ENCODE measurements at regions of chr5 and their contacts with region 1.

Region 1: DNA sequence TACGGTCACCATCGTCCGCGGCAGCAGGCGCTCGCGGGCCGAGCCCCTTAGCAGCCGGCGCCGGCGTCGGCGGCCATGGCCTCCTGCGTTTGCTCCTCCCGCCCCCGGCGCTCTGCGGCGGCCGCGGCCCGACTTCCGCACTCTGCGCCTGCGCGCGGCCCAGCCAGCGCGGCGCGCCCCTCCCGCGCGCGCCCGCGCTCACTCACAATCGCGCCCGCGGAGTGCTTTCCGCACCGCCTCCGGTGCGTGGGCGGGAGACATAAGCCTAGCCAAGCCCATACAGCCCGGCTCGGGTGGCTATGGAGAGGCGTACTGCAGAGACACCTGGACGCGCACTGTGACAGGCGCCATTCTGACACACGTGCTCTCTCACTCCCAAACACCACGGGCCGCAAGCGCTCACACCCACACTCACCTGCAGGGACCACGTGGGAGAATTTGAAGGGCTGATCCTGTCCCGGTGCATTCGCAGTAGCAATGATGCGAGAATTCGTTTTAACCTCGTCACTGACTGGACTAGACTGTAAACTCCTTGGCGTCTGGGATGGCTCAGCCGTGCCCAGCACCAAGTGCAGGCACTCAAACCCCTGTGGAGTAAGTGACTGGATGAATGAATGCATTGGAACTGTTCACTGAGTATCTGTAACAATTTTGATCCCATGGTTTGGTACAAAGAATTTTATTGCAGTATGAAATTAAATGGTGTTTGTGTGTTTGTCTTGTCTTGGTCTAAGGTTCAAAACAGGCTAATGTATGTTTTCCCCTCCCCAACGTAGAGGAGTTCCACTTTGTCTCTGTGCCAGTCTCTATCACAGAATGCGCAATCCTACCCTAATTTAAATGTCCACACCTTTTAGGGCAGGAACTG is at the start of gene RNF145:
- DNase-seq: peak; percentile 87 to 93 (median 92)
- ATAC-seq: peak; percentile 59 to 86 (median 82)
- H3K4me3 ChIP-seq: peak within 1 kb of the TSS; percentile 62 to 99 (median 90)
- H3K27ac ChIP-seq: peak within 1 kb of the TSS; percentile 82 to 99 (median 94)
- H3K4me1 ChIP-seq: peaks cover 3 to 50% (median 24%) of the 10 kb centered on the region in 12 donors
- H3K27me3 ChIP-seq: no peaks in the 10 kb centered on the region
- CTCF ChIP-seq: no peak
- POLR2A ChIP-seq: no peak
- total RNA-seq, gene RNF145: 15.5 to 47.0 (median 25.2) TPM

Region 2: DNA sequence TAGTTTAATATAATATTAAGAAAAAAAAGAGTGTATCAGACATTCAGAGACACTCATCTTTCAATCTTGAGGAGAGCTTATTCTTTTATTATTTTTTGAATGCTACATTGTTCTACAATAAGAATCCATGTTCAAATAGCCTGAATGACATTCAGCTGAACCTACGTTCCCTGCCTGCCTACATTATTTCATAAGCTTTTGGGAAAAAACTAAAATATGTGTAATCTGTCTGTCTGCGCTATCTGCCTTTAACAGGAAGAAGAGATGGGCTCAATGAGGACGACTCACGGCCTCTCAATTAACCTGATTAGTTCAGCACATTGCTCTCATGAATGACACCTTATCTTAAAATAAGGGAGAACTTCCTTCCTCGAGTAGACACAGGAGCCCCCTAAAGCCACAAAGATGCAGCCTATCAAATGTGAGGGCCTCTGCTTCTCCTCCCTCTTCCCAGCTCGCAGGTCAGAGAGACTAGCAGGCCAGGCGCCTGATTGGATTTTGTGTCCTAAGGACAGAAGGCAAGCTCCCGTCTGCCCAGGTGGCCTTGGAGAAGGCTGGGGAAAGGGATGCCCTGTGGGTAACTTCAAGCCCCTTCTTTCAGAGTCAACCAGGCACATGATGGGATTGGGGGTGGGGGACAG is 147.7 kb before region 1 on chr5:
- intact Hi-C with region 1: no loop called
- DNase-seq: no peak
- ATAC-seq: peak in 2 of 4 donors; percentile 28 to 43
- H3K4me3 ChIP-seq: peak overlapping the region in 10 of 12 donors; percentile 6 to 54 (median 29)
- H3K27ac ChIP-seq: peak overlapping the region; percentile 44 to 83 (median 65)
- H3K4me1 ChIP-seq: peaks cover 0 to 57% (median 24%) of the 10 kb centered on the region in 12 donors
- H3K27me3 ChIP-seq: no peaks in the 10 kb centered on the region
- CTCF ChIP-seq: no peak
- POLR2A ChIP-seq: no peak

Region 3: DNA sequence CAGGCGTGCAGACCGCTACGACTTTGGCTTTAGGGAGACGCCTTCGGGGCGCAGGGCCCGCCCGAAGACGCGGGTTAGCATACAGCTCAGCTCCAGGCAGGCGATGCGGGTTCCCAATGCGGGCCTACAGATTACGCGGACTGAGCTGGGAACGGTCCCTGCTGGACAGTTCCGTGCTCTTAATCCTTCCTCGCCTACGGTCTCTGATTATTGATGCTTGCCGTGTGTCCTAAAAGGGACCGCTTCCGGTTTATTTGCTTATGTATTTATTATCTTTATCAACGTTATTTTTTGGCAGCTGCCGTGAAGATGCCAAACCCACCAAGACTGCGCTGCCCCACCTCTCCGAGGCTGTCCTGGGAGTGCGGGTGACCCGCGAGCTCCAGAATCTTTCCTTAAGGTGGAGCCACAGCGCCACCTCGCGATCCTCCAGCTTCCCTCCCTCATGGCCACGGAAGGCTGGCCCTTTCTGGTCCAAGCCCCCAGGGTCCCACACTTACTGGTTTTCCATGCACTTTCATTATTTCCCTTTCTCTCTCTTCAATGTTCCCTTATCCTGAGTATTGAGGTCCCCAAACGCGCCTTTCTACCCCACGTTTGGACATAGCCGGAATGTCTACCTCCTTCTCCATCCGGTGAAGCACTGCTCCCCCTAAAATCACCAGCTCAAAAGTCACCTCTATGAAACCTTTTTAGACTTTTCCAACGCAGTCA is 102.9 kb before region 1 on chr5:
- intact Hi-C with region 1: no loop called
- DNase-seq: peak; percentile 73 to 85 (median 81)
- ATAC-seq: peak; percentile 79 to 92 (median 92)
- H3K4me3 ChIP-seq: peak overlapping the region; percentile 11 to 56 (median 44)
- H3K27ac ChIP-seq: peak overlapping the region in 3 of 12 donors; percentile 8 to 51 (median 36)
- H3K4me1 ChIP-seq: peaks cover 0 to 42% (median 13%) of the 10 kb centered on the region in 12 donors
- H3K27me3 ChIP-seq: peaks cover 0 to 65% (median 19%) of the 10 kb centered on the region in 9 donors
- CTCF ChIP-seq: peak; percentile 83 to 98 (median 95)
- POLR2A ChIP-seq: no peak

Region 4: DNA sequence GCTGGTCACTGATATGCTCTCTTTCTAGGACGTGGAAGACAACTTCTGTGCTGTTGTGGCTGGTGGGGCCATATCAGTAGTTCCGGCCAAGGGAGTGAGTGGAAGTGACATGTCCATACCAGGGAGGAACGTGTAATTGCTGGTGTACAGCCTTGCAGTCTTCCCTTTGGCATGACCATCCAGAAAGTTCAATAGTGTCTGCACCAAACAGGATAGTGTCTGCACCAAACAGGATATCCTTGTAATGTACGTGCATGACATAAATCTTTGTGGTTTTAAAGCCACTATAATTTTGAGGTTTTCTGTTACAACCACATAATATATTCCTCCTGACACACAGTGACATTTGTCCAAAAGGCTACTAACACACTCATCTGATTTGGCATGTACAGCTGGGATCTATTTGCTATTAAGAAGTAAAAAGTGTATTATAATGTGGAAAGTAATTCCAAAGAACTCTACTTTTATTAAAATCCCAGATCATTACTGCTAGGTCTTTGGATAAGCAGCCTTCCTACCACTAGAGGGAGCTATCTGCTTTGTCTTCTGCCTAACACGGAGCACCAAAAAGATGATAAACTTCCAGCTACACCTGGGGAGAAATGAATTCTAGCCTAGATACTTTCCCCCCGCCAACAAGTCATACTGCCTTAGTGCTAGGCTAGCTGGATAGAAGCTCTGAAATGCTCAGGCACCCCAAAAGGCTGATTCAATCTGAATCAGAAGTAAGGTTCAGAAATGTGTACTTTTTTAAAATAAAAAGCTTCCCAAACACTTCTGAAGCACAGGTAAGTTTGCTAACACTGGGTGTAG is 53.0 kb before region 1 on chr5:
- intact Hi-C with region 1: loop called in 5 of 10 experiments (anchors 5 to 10 kb)
- DNase-seq: peak in 1 of 5 donors; percentile 40
- ATAC-seq: peak; percentile 59 to 84 (median 78)
- H3K4me3 ChIP-seq: no peak overlapping the region
- H3K27ac ChIP-seq: peak overlapping the region in 1 of 12 donors; percentile 23
- H3K4me1 ChIP-seq: peaks cover 0 to 7% (median 0%) of the 10 kb centered on the region in 12 donors
- H3K27me3 ChIP-seq: no peaks in the 10 kb centered on the region
- CTCF ChIP-seq: peak; percentile 77 to 95 (median 89)
- POLR2A ChIP-seq: no peak

Region 5: DNA sequence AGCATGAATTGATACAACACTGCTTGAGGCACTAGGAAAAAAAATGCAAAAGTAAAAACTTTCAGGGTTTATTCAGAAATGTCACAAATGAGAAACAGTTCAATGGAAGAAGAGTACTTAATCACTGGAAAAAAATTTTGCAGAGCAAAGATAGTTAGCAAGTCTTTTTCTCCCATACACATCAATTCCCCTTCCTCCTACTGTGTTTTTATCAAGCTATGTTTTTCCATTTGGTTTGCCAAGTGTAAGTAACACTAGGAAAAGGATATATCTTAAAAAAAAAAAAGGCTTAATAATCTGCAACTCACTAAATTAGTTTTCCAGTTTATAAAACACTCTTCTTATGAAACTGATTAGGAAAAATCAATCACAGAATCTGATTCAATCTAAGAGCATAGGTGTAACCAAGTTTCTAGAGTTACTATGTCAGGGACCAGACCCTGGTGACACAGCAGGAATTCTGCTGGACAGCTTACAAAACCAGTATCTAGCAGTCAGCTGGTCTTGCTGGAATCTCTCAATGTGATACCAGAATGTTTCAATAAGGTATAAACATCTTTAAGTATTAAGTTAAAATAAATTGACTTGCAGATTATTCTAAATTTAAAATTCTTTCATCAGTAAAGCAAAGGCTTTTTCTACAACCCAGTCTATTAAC is 35.0 kb before region 1 on chr5:
- intact Hi-C with region 1: loop called in 7 of 10 experiments (anchors 5 kb)
- DNase-seq: no peak
- ATAC-seq: peak in 3 of 4 donors; percentile 62 to 71 (median 64)
- H3K4me3 ChIP-seq: no peak overlapping the region
- H3K27ac ChIP-seq: peak overlapping the region; percentile 27 to 67 (median 55)
- H3K4me1 ChIP-seq: peaks cover 8 to 57% (median 34%) of the 10 kb centered on the region in 12 donors
- H3K27me3 ChIP-seq: no peaks in the 10 kb centered on the region
- CTCF ChIP-seq: no peak
- POLR2A ChIP-seq: no peak

Region 6: DNA sequence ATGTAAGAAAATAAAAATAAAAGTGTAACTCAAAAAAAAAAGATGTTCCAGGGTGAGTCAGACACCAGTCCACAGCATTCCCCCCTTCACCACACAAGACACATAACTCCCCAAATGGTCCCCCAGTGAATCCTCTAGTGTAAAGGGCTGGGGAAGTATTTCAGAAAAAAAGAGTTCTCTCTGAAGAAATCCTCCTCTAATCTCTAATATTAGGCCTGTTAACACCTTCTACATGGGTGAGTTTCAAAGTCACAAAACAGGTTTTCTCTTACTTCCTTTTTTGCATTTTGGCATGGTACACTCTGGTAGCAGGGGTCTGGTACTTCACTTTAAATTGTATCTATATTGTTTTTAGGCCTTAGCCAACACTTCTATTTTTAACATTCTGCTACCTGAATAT is 28.5 kb before region 1 on chr5:
- intact Hi-C with region 1: loop called in 1 of 10 experiments (anchors 2 kb)
- DNase-seq: no peak
- ATAC-seq: no peak
- H3K4me3 ChIP-seq: no peak overlapping the region
- H3K27ac ChIP-seq: peak overlapping the region in 7 of 12 donors; percentile 2 to 89 (median 48)
- H3K4me1 ChIP-seq: peaks cover 0 to 94% (median 54%) of the 10 kb centered on the region in 12 donors
- H3K27me3 ChIP-seq: no peaks in the 10 kb centered on the region
- CTCF ChIP-seq: no peak
- POLR2A ChIP-seq: no peak

Region 7: GRCh38 chr5:159257629-159258283 is 48.1 kb after region 1 on chr5:
- intact Hi-C with region 1: loop called in 8 of 10 experiments (anchors 2 to 10 kb)
- DNase-seq: no peak
- ATAC-seq: no peak
- H3K4me3 ChIP-seq: no peak overlapping the region
- H3K27ac ChIP-seq: no peak overlapping the region
- H3K4me1 ChIP-seq: peaks cover 0 to 7% (median 3%) of the 10 kb centered on the region in 12 donors
- H3K27me3 ChIP-seq: peaks cover 0 to 14% (median 0%) of the 10 kb centered on the region in 9 donors
- CTCF ChIP-seq: peak in 3 of 12 donors; percentile 30 to 57 (median 45)
- POLR2A ChIP-seq: no peak

Region 8: GRCh38 chr5:159262859-159263567 is 53.3 kb after region 1 on chr5 and contains the start of gene UBLCP1:
- intact Hi-C with region 1: loop called in 8 of 10 experiments (anchors 2 to 10 kb)
- DNase-seq: peak; percentile 81 to 89 (median 83)
- ATAC-seq: peak; percentile 90 to 96 (median 95)
- H3K4me3 ChIP-seq: peak within 1 kb of the TSS; percentile 59 to 98 (median 90)
- H3K27ac ChIP-seq: peak within 1 kb of the TSS; percentile 79 to 97 (median 90)
- H3K4me1 ChIP-seq: peaks cover 0 to 24% (median 14%) of the 10 kb centered on the region in 12 donors
- H3K27me3 ChIP-seq: no peaks in the 10 kb centered on the region
- CTCF ChIP-seq: peak in 1 of 12 donors; percentile 15
- POLR2A ChIP-seq: peak in 1 of 2 donors; percentile 50
- total RNA-seq, gene UBLCP1: 11.9 to 20.4 (median 14.4) TPM